SK-MEL-5 (cell line): ENCODE measurements at regions of chr10 and their contacts with region 1.

Region 1: DNA sequence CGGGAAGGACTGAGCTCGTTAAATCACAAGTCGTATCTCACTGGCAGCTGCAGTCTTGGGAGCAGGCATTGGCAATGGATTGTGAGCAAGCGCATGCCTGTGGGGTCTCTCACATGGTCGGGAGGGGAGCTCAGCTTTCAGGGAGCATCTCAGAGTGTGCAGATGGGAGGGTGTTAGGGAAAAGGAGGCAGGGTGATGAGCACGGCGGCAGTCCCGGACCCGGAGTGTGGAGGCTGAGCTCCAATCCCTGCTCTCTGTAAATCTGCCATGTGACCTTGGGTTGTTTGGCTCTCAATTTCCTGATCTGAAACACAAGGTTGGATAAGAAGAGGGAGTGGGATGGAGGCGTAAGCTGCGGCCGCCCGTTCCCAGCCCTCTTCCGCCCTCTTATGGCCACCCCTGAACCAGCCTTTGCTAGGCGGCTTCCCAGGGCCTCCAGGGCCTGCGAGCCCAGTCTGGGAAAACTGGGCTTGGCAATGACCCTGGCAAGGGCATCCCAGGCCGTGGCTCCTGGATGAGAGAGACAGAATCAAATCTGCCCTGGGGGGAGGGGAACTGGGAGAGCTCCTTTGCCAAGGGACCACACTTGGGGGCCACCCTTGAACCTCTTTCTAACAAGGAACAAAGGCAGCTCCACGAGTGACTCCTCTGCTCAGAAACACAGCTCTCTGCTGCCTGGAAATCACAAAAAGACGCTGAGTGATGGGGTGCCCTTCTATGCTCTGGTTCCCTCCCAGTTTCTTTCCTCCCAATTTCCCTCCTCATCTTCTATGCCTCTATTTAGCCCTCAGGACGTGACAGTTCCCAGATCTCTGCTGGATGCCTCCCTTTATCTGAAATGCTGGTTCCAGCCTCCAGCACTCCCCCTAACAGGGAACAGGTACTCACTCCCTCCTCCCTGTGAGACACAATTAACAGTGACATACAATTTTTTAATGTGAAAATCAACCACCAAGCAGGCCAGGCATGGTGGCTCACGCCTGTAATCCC is 41.7 kb upstream of the LOXL4 start:
- DNase-seq: peak; percentile 82

Region 2: DNA sequence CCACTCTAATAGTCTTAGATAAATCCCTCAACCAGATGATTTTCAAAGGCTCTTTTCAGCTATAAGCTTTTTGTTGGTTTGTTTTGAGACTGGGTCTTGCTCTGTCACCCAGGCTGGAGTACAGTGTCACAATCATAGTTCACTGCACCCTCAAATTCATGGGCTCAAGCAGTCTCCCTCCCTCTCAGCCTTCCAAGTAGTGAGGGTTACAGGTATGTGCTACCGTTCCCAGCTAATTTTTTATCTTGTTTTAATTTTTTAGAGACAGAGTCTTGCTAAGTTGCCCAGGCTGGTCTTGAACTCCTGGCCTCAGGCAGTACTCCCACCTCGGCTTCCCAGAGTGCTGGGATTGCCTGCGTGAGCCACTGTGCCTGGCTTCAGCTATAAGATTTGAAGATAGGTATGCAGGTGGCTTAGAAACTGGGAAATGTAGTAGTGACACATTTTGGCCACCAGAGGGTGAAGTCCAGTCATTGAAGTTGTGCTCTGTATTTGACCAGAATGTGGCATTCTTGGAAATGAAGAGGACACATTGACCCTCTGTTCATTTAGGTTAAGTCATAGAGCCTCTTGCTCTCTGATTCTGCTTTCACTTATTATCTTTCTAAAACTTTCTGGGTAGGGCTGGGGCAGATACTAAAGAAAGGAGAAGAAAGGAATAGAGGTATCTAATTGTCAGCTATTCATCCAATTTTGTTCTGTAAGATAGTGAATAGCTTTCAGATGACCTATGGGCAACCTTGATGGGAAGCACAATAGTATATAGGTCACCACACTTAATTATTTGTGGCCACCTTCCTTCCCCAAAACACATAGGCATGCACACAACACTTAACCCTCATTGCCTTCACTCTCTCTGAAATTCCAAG is 139.2 kb before region 1 on chr10:
- in situ Hi-C with region 1: loop called (anchors 25 kb)
- DNase-seq: peak; percentile 65

Region 3: DNA sequence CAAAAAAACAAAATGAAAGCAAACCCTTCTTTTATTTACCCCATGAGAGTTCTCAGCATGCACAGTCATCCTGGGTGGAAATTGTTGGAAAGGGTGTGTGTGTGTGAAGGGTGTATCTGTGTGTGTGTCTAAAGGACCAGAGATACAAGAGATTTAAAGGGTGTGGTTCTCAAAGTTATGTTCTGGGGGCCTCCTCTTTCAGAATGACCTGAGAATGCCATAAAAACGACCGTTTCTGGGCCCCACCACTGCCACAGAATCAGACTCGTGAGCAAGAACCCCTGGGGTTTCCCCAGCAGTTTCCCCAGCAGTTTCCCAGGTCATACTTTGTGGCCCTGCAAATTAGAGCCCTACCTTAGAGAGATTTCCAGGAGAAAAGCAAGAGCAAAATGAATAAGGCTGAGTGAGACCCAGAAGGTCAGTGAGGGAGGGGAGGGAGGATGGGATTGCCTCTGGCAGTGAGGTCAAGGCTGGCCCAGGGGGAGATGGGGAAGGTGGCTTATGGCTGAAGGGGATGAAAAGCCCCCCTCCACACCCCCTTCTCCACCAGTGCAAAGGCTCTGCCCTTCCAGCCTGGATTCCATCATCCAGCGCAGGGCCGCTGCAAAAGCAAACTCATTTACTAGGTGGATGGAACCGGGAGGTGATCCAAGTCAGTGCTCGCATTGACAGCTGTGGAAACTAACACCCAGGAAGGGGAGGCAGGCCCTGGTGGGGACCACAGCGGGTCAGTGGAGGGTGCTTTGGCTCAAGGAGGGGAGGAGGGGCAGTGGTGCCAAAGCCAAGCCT is 95.1 kb after region 1 on chr10:
- in situ Hi-C with region 1: no loop called
- DNase-seq: no peak